ENCODE measurements at regions of chr10 and their contacts with region 1.

Region 1: GRCh38 chr10:4825851-4826665 is at the start of gene AKR1E2:
- H3K4me3 Mint-ChIP-seq: peak within 1 kb of the TSS; percentile 74
- H3K27ac Mint-ChIP-seq: peak within 1 kb of the TSS; percentile 94
- H3K4me1 Mint-ChIP-seq: peaks cover 32% of the 10 kb centered on the region
- H3K27me3 Mint-ChIP-seq: peaks cover 26% of the 10 kb centered on the region

Region 2: GRCh38 chr10:4623757-4624420 is 202.2 kb before region 1 on chr10:
- intact Hi-C with region 1: no loop called
- H3K4me3 Mint-ChIP-seq: no peak overlapping the region
- H3K27ac Mint-ChIP-seq: no peak overlapping the region
- H3K4me1 Mint-ChIP-seq: peaks cover 18% of the 10 kb centered on the region
- H3K27me3 Mint-ChIP-seq: peaks cover 7% of the 10 kb centered on the region

Region 3: DNA sequence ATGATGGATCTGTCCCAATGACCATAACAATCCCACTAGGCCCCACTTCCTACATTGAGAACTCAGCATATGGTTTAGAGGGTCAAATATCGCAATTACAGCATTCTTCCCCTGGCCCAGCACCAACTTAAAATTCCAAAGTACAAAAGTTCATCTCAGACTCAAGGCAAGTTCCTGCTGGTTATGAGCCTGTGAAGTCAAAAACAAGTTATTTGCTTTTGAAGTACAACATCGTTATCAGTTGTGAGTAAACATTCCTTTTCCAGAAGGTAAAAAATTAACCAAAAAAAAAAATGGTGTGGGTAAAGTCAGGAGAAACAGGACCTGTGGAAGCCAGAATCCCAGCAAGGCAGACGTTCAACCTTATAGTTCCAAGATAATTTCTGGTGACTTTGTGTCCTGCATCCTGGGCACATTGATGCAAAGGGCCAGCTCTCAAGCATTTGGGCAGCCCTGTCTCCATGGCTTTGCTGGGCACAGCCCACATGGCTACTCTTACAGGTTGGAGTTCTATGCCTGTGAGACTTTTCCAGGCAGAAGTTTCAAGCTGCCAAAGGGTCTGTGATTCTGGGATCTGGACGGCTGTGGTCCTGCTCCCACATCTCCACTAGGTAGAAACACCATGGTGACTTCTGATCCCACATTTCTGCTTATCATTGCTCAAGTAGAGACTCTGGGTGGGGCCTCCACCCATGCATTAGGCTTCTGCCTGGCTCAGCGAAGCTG is 321.4 kb after region 1 on chr10:
- intact Hi-C with region 1: no loop called
- H3K4me3 Mint-ChIP-seq: no peak overlapping the region
- H3K27ac Mint-ChIP-seq: no peak overlapping the region
- H3K4me1 Mint-ChIP-seq: no peaks in the 10 kb centered on the region
- H3K27me3 Mint-ChIP-seq: no peaks in the 10 kb centered on the region

Region 4: DNA sequence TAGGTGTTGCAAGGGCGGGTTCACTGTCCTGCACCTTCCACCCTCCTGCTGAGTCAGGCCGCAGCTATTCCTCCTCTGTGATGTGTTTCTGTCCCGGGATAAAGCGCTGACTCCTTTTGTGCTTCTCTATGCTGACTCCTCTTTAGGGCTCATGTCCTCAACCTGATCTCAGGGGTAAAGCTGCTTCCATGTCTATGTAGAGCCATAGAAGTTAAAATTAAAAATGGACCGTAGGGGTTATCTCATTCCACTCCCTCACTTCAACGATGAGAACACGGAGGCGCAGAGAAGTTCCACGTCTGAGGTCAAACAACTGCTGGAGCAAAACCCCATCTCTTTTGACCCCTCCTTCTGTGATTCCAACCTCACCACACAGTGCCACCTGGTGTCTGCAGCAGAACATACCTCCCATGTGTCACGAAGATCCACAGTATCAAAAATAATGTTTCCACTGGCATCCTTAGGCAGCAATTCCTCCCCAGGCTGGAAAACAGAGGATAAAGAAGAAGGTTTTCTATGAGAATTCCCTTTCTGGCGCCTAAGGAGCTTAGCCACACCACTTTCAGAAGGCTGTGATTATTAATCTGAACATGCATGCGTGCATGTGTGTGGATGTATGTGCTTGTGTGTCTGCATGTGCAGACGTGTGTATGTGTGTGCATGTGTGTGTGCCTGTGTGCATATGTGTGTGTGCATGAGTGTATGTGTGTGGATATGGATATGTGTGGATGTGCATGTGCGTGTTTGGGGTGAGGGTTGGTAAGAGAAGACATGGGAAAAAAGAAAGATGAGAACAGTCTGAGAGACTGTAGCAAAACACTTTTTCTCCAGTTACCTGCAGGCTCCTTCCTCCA is 457.5 kb after region 1 on chr10:
- intact Hi-C with region 1: loop called (anchors 10 kb)
- H3K4me3 Mint-ChIP-seq: no peak overlapping the region
- H3K27ac Mint-ChIP-seq: peak overlapping the region; percentile 86
- H3K4me1 Mint-ChIP-seq: peaks cover 51% of the 10 kb centered on the region
- H3K27me3 Mint-ChIP-seq: peaks cover 3% of the 10 kb centered on the region

Region 5: GRCh38 chr10:5412277-5412941 is 586.4 kb after region 1 on chr10 and contains the start of gene NET1:
- intact Hi-C with region 1: loop called (anchors 10 kb)
- H3K4me3 Mint-ChIP-seq: peak within 1 kb of the TSS; percentile 70
- H3K27ac Mint-ChIP-seq: no peak within 1 kb of the TSS
- H3K4me1 Mint-ChIP-seq: no peaks in the 10 kb centered on the region
- H3K27me3 Mint-ChIP-seq: peaks cover 8% of the 10 kb centered on the region

Region 6: GRCh38 chr10:5623081-5623748 is 797.2 kb after region 1 on chr10:
- intact Hi-C with region 1: loop called (anchors 10 kb)
- H3K4me3 Mint-ChIP-seq: no peak overlapping the region
- H3K27ac Mint-ChIP-seq: no peak overlapping the region
- H3K4me1 Mint-ChIP-seq: peaks cover 13% of the 10 kb centered on the region
- H3K27me3 Mint-ChIP-seq: peaks cover 4% of the 10 kb centered on the region

Measured in dendritic cell treated with granulocyte-macrophage colony-stimulating factor and Interleukin-4, amounts not matched to agents 40 ng/mL and 50 ng/mL, for 4 days (primary cell).